Left colon (tissue), 2 donors: ENCODE measurements at regions of chr3 and their contacts with region 1.

Region 1: DNA sequence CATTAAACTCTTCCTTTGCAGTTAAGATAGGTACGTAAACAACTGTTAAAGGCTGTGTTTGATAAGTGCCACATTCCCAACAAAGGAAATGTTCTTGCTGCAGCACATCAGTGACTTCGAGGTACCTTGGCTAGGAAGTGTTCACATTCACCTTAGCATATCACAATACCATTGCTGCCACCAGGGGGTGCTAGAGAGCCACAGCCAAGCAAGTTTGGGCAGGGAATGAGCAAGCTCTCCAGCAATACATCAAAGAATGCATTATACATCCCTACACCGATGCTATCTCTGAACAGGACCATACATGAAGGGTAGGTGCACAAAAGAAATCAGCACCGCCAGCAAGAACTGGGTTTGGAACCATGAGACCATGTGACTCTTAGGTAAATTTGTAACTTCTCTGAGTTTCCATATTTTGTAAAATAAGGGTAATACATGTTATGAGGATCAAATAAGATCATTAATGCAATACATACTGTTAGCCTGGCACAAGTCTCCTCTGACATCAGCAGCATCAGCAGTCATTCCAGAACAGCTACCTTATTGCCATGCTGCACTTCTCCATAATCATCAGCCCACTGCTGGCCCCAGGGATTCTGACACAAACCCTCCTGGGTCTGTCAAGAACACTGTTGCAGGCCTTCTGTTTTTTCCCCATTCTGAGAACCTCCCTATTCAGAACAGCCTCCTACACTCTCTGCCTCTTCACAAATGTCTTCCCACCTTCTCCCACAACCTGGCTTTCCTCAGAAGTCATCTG is 37.6 kb downstream of the RYK start:
- DNase-seq: peak; percentile 53 to 89
- ATAC-seq: peak; percentile 92

Region 2: DNA sequence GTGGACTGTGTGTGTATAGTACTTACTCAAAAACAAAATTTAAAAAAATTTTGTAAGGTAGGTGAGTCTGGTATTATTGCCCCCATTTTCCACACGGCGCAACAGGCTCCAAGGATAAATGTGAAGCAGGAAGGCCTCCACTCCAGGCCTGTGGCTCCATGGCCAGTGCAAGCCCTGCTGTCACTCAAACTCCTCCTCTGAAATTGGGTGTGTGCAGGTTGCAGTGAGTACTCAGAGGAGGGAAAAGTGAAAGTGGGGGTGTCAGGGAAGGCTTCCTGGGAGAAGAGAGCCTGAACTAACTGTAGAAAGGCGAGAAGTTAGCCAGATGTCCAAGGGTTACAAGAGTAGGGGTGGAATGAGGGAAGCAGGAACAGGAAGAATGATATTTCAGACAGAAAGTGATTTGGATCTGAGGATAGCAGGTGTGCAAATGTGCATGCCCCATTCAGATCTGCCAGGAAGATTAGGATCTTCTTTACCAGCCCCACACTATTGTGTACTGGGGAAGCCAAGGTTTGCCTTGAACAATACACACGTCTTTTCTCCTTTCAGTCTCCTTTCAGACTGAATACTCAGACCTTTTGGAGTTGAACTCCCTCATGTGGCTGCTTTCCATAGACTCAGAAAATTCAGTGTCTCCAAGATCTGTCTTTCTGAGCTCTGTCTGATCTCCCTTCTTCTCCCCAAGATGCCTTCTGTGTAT is 86.2 kb after region 1 on chr3:
- intact Hi-C with region 1: loop called (anchors 5 to 10 kb)
- DNase-seq: peak in 1 of 2 donors; percentile 49
- ATAC-seq: peak; percentile 96

Region 3: DNA sequence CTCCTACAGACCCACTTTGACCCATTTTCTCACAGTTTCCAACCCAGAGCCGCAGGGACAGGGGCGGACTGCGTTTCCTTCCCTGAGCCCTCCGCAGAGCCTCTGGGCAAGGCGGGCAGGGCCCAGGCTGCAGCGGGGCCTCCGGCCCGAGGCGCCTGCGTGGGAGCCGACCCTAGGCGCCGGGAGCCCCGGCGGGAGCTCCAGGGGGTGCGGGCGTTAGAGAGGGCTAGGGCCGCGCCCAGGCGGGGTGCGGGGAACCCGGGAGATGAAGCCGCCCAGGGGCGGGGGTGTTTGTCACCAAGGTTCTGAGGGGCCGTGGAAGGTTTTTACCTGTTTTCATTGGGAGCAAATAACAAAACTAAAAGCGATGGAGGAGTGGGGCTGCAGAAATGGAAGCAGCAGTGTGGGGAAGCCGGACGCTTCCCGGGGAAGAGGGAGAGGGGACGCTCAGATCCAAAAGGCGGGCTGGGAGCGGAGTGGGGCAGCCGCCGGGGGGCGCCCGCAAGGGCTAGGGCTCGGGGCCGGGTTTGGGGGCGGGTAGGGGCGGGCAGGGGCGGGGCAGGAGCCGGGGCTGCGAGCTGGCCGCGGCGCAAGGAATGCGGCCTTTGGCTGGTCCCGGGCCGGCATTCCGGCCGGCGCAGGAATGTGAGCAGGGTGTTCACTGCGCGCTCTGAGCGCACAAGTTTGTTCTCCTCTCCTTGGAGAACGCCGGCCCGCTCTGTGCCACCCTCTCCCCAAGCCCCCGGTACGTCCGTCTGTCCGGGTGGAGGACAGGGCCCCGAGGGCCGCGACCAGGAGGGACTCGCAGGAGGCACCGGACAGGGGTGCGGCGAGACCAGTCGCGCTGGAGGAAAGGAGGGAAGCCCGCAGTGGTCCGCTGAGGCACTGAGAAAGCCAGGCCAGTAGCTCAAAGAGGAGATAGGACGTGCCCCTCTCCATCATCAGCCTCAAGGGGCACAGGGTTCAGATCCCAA is 100.1 kb after region 1 on chr3:
- intact Hi-C with region 1: no loop called
- DNase-seq: peak in 1 of 2 donors; percentile 62
- ATAC-seq: peak; percentile 41